ENCODE measurements at regions of chr20 and their contacts with region 1.

Region 1: GRCh38 chr20:6184080-6184479 is 61.2 kb upstream of the FERMT1 start:
- DNase-seq: no peak
- H3K4me3 ChIP-seq: no peak overlapping the region
- H3K27ac ChIP-seq: no peak overlapping the region
- H3K4me1 ChIP-seq: no peaks in the 10 kb centered on the region
- H3K27me3 ChIP-seq: peaks cover 0 to 1% (median 0%) of the 10 kb centered on the region in 4 experiments; a peak in 1 of 7 replicates
- CTCF ChIP-seq: peak; percentile 21 to 55 (median 49); a peak in 3 of 4 replicates
- EP300 ChIP-seq: no peak
- POLR2A ChIP-seq: no peak
- RAD21 ChIP-seq: peak; percentile 12 to 25; a peak in 2 of 4 replicates

Region 2: DNA sequence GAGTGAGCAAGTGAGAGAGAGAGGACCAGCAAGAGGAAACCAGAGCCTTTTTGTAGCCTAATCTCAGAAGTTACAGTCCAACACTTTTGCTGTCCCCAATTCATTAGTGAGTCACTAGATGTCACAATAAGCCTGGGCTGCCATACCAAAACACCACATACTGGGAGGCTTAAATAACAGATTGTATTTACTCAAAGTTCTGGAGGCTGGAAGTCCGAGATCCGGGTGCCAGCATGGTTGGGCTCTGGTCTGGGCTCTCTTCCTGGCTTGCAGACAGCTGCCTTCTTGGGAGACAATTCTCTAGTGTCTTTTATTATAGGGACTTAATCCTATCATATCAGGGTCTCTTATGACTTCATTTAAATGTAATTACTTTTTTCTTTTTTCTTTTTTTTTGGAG is 10.6 kb before region 1 on chr20:
- CTCF ChIA-PET with region 1: interaction called, 11 read pairs
- POLR2A ChIA-PET with region 1: no interaction called
- DNase-seq: no peak
- H3K4me3 ChIP-seq: no peak overlapping the region
- H3K27ac ChIP-seq: no peak overlapping the region
- H3K4me1 ChIP-seq: no peaks in the 10 kb centered on the region
- H3K27me3 ChIP-seq: no peaks in the 10 kb centered on the region
- CTCF ChIP-seq: no peak
- EP300 ChIP-seq: no peak
- POLR2A ChIP-seq: no peak
- RAD21 ChIP-seq: no peak

Region 3: GRCh38 chr20:6200092-6200491 is 16.0 kb after region 1 on chr20:
- CTCF ChIA-PET with region 1: interaction called, 18 read pairs
- POLR2A ChIA-PET with region 1: no interaction called
- DNase-seq: no peak
- H3K4me3 ChIP-seq: no peak overlapping the region
- H3K27ac ChIP-seq: no peak overlapping the region
- H3K4me1 ChIP-seq: no peaks in the 10 kb centered on the region
- H3K27me3 ChIP-seq: no peaks in the 10 kb centered on the region
- CTCF ChIP-seq: no peak
- EP300 ChIP-seq: no peak
- POLR2A ChIP-seq: no peak
- RAD21 ChIP-seq: no peak

Region 4: DNA sequence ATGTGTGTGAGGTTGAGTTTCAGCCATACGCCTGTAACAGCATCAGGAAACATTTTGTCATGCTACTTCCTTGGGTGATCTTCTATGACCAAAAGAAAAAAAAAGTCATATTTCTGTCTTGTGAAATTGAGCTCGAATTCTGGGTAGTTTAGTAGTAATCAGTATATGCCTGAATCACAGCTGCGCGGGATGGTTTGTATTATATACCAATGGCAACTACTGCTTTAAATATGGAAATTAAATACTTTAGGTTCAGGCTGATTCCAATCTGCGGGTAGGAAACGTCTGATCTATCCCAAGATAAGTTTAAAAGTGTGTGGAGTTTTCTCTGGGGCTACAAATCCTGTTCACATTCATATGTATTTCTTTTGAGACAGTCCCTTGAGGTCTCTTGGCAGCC is 54.3 kb after region 1 on chr20:
- CTCF ChIA-PET with region 1: interaction called, 12 read pairs
- POLR2A ChIA-PET with region 1: no interaction called
- DNase-seq: no peak
- H3K4me3 ChIP-seq: no peak overlapping the region
- H3K27ac ChIP-seq: no peak overlapping the region
- H3K4me1 ChIP-seq: no peaks in the 10 kb centered on the region
- H3K27me3 ChIP-seq: peaks cover 0 to 1% (median 0%) of the 10 kb centered on the region in 4 experiments; a peak in 1 of 7 replicates
- CTCF ChIP-seq: no peak
- EP300 ChIP-seq: no peak
- POLR2A ChIP-seq: no peak
- RAD21 ChIP-seq: no peak